Activated naive CD4-positive, alpha-beta T cell treated with anti-CD3 and anti-CD28 coated beads for 36 hours (primary cell): ENCODE measurements at regions of chr4 and their contacts with region 1.

Region 1: GRCh38 chr4:82968972-82969371 is 41.7 kb downstream of the LIN54 start:
- DNase-seq: no peak
- H3K4me3 Mint-ChIP-seq: no peak overlapping the region
- H3K27ac Mint-ChIP-seq: no peak overlapping the region
- H3K4me1 Mint-ChIP-seq: peaks cover 2% of the 10 kb centered on the region
- H3K27me3 Mint-ChIP-seq: no peaks in the 10 kb centered on the region

Region 2: DNA sequence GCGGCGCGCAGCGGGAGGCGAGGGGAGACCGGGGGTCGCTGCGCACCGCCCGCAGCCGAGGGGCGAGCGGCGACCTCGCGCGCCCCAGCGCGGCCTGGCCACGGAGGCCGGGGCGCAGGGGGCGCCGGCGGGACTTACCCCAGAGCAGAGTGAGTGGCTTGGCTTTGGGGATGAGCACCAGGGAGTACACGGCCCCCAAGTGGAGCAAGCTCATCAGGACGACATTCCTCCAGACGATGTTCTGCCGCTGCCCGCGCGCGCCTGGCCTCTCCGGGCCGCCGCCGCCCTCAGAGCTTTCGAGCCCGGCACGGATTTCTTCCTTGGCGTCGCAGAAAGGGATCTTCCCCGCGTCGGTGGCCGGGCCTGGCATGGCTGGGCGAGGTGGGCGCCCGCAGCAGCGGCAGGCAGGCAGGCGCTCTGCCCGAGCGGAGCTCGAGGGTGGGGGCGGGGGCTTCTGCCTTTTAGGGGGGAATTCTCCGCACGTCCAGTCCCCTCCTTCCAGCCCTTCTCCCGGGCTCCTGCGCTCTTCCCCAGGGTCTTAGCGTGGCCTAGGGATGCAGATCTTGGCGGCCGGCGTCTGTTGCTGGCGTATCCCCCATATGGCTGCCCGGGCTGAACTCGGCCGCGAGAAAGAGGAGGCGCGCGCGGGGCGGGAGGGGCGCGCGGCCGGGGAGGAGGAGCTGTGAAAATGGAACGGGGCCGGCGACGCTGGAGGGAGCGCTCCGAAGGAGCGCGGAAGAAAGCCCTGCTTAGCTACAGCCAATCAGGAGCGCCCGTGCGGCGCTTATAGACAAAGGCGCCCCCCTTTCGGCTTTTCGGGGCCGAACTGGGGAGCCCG is 170.6 kb before region 1 on chr4 and contains the start of gene SCD5:
- CTCF ChIA-PET with region 1: no interaction called
- intact Hi-C with region 1: no loop called
- DNase-seq: peak; percentile 31
- H3K4me3 Mint-ChIP-seq: peak within 1 kb of the TSS; percentile 73
- H3K27ac Mint-ChIP-seq: no peak within 1 kb of the TSS
- H3K4me1 Mint-ChIP-seq: peaks cover 15% of the 10 kb centered on the region
- H3K27me3 Mint-ChIP-seq: peaks cover 42% of the 10 kb centered on the region
- total RNA-seq, gene SCD5: 0.12 to 0.35 TPM

Region 3: DNA sequence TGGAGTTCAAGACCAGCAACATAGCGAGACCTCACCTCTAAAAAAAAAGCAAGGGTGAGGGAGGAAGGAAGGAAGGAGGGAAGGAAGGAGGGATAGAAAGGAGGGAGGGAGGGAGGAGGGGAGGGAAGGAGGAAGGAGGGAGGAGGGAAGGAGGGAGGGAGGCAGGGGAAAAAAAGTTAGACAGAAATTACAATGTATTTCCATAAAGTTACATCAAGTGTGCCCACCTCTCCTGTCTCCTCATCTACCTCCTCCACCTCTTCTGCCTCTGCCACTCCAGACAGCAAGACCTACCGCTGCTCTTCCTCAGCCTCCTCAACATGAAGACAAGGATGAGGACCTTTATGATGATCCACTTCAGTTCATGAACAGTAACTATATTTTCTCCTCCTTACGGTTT is 33.4 kb after region 1 on chr4:
- CTCF ChIA-PET with region 1: no interaction called
- intact Hi-C with region 1: loop called (anchors 5 kb)
- DNase-seq: no peak
- H3K4me3 Mint-ChIP-seq: no peak overlapping the region
- H3K27ac Mint-ChIP-seq: no peak overlapping the region
- H3K4me1 Mint-ChIP-seq: peaks cover 16% of the 10 kb centered on the region
- H3K27me3 Mint-ChIP-seq: no peaks in the 10 kb centered on the region

Region 4: GRCh38 chr4:83012687-83013419 is 43.9 kb after region 1 on chr4:
- CTCF ChIA-PET with region 1: no interaction called
- intact Hi-C with region 1: no loop called
- DNase-seq: peak; percentile 98
- H3K4me3 Mint-ChIP-seq: peak overlapping the region; percentile 95
- H3K27ac Mint-ChIP-seq: peak overlapping the region; percentile 87
- H3K4me1 Mint-ChIP-seq: peaks cover 29% of the 10 kb centered on the region
- H3K27me3 Mint-ChIP-seq: no peaks in the 10 kb centered on the region